ENCODE measurements at regions of chr6 and their contacts with region 1.

Region 1: DNA sequence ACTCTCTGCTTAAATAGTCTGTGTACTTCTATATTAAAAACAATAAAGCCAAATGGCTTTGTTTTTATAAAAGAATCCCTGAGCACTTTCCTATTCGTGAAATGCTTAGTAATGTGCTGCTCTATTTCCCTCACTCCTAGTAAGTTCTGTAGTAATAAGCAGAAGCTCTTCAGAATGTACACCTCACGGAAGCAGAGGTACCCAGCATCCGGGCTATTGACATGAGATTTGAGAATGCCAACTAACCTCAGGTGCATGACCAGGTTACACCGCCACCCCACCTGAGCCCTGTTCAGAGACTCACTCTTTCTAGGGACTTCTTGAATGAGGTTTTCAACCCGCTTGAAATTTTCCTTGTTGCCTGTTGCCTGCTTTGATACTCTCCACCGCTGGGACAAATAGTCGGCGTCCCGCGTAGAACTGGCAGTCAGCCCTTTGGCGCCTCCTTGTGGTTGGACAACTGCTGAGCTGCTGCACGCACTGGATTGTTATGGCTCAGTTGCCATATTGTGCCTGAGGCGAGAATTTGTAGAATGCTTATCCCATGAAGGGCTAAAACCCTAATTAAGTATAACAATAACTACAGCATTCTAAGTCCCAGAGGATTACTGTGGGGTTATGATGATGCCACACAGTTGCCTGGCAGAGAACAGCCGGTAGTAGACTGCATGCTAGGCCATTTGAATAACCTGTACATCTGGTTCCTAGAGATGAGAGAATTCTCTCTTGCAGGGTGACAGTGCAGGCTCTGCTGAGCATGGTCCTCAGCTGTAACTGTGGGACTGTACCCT is 95.4 kb downstream of the KHDC1L start:
- DNase-seq: peak; percentile 59
- H3K4me3 ChIP-seq: no peak overlapping the region
- H3K27ac ChIP-seq: no peak overlapping the region
- H3K4me1 ChIP-seq: no peaks in the 10 kb centered on the region
- H3K27me3 ChIP-seq: peaks cover 2 to 23% of the 10 kb centered on the region in 2 experiments
- CTCF ChIP-seq: peak; percentile 96 to 97
- POLR2A ChIP-seq: no peak

Region 2: GRCh38 chr6:72616406-72617015 is 513.3 kb before region 1 on chr6:
- CTCF ChIA-PET with region 1: interaction called, 731 read pairs
- POLR2A ChIA-PET with region 1: no interaction called
- dilution Hi-C with region 1: loop called (anchors 10 kb)
- intact Hi-C with region 1: loop called (anchors 1 kb)
- DNase-seq: peak; percentile 39
- H3K4me3 ChIP-seq: no peak overlapping the region
- H3K27ac ChIP-seq: no peak overlapping the region
- H3K4me1 ChIP-seq: peaks cover 2% of the 10 kb centered on the region
- H3K27me3 ChIP-seq: peaks cover 24 to 38% of the 10 kb centered on the region in 2 experiments
- CTCF ChIP-seq: peak; percentile 24 to 31
- POLR2A ChIP-seq: no peak

Region 3: GRCh38 chr6:72639920-72640614 is 489.8 kb before region 1 on chr6:
- CTCF ChIA-PET with region 1: interaction called, 10 read pairs
- POLR2A ChIA-PET with region 1: no interaction called
- dilution Hi-C with region 1: no loop called
- intact Hi-C with region 1: no loop called
- DNase-seq: no peak
- H3K4me3 ChIP-seq: no peak overlapping the region
- H3K27ac ChIP-seq: no peak overlapping the region
- H3K4me1 ChIP-seq: no peaks in the 10 kb centered on the region
- H3K27me3 ChIP-seq: peaks cover 0 to 4% of the 10 kb centered on the region in 2 experiments
- CTCF ChIP-seq: no peak
- POLR2A ChIP-seq: no peak

Region 4: GRCh38 chr6:72999995-73000394 is 129.9 kb before region 1 on chr6:
- CTCF ChIA-PET with region 1: no interaction called
- POLR2A ChIA-PET with region 1: no interaction called
- dilution Hi-C with region 1: no loop called
- intact Hi-C with region 1: no loop called
- DNase-seq: no peak
- H3K4me3 ChIP-seq: no peak overlapping the region
- H3K27ac ChIP-seq: no peak overlapping the region
- H3K4me1 ChIP-seq: no peaks in the 10 kb centered on the region
- H3K27me3 ChIP-seq: no peaks in the 10 kb centered on the region
- CTCF ChIP-seq: no peak
- POLR2A ChIP-seq: no peak

Region 5: DNA sequence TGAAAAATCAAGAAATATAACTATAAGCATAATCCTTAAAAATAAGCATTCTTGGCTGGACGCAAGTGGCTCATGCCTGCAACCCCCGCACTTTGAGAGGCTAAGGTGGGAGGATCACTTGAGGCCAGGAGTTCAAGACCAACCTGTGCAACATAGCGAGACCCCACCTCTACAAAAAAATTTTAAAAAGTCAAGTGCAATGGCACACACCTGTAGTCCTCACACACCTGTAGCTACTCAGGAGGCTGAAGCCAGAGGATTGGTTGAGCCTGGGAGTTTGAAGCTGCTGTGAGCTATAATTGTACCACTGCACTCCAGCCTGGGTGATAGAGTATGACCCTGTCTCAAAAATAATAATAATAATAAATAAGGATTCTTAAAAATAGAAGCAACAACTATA is 13.5 kb before region 1 on chr6:
- CTCF ChIA-PET with region 1: interaction called, 22 read pairs
- POLR2A ChIA-PET with region 1: no interaction called
- dilution Hi-C with region 1: no loop called
- intact Hi-C with region 1: no loop called
- DNase-seq: no peak
- H3K4me3 ChIP-seq: no peak overlapping the region
- H3K27ac ChIP-seq: no peak overlapping the region
- H3K4me1 ChIP-seq: no peaks in the 10 kb centered on the region
- H3K27me3 ChIP-seq: no peaks in the 10 kb centered on the region
- CTCF ChIP-seq: no peak
- POLR2A ChIP-seq: no peak

Region 6: GRCh38 chr6:73200735-73201134 is 70.9 kb after region 1 on chr6:
- CTCF ChIA-PET with region 1: no interaction called
- POLR2A ChIA-PET with region 1: no interaction called
- dilution Hi-C with region 1: no loop called
- intact Hi-C with region 1: no loop called
- DNase-seq: no peak
- H3K4me3 ChIP-seq: no peak overlapping the region
- H3K27ac ChIP-seq: no peak overlapping the region
- H3K4me1 ChIP-seq: no peaks in the 10 kb centered on the region
- H3K27me3 ChIP-seq: peaks cover 0 to 2% of the 10 kb centered on the region in 2 experiments
- CTCF ChIP-seq: no peak
- POLR2A ChIP-seq: no peak

Region 7: DNA sequence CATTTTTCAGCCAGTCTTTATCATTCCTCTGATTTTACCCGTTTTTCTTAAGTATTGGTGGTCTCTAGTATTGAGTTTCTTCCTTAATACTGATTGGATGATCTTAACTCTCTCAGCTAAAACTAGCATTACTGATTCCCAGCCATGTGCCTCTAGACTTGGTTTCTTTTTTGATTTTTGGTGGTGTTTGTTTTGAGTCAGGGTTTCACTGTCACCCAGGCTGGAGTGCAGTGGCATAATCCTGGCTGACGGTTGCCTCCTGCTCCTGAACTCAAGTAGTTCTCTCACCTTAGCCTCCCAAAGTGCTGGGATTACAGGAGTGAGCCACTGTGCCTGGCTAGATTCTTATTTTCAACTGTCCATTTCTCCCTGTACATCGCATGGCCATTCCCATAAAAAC is 199.4 kb after region 1 on chr6:
- CTCF ChIA-PET with region 1: interaction called, 43 read pairs
- POLR2A ChIA-PET with region 1: no interaction called
- dilution Hi-C with region 1: no loop called
- intact Hi-C with region 1: loop called (anchors 2 kb)
- DNase-seq: no peak
- H3K4me3 ChIP-seq: no peak overlapping the region
- H3K27ac ChIP-seq: no peak overlapping the region
- H3K4me1 ChIP-seq: no peaks in the 10 kb centered on the region
- H3K27me3 ChIP-seq: peaks cover 6 to 14% of the 10 kb centered on the region in 2 experiments
- CTCF ChIP-seq: no peak
- POLR2A ChIP-seq: no peak